Activated T-helper 1 cell treated with anti-CD3 and anti-CD28 coated beads, Interleukin-12 subunit alpha, Interleukin-12 subunit beta, Interleukin-2, Interleukin-4 antibody, amounts not matched to agents 30 ng/mL and 10 ng/mL and 1 ng/mL, durations not matched to agents 14 hours and 24 hours and 36 hours (primary cell): ENCODE measurements at regions of chr19 and their contacts with region 1.

Region 1: GRCh38 chr19:50724522-50725217 is 1.5 kb downstream of the CLEC11A start:
- DNase-seq: peak; percentile 97
- H3K4me3 Mint-ChIP-seq: peak overlapping the region; percentile 85
- H3K27ac Mint-ChIP-seq: peak overlapping the region; percentile 78
- H3K4me1 Mint-ChIP-seq: no peaks in the 10 kb centered on the region
- H3K27me3 Mint-ChIP-seq: peaks cover 38% of the 10 kb centered on the region

Region 2: DNA sequence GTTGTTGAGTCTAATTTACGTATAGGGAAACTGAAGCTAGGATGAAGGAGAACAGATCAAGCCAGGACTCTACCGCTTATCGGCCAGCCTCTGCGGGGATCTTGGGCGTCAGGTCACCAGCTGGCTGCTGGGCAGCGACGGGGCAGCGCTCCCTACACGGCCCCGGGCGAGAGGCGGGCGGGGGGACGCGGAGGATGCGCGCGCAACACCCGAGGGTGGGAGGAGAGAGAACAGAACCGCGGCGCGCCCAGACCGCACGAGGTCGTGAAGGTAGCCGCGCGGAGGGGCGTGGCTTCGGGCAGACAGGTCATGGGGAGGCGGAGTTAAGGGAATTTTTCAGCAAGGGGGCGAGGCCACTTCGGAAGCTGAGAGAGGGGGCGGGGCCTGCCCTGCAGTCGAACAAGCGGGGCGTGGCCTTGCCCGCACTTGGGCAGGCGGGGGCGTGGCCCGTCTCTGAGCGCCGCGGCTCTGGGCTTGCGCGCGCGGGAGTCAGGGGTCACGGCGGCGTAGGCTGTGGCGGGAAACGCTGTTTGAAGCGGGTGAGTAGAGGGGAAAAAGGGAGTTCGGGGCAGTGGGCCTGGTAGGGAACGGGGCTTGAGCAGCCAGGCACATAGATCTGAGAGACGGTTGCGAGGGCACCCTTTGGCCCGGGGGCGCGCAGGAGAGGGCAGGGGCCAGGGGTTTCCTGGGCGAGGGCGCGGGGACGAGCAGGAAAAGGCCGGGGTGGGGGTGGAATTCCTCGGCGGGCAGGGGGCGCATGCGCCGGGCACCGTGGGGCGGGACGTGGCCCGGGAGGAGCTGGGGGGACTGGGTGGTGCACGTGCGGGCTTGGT is 340.6 kb before region 1 on chr19 and contains the start of gene POLD1:
- intact Hi-C with region 1: loop called (anchors 2 kb)
- DNase-seq: peak; percentile 99
- H3K4me3 Mint-ChIP-seq: peak within 1 kb of the TSS; percentile 91
- H3K27ac Mint-ChIP-seq: peak within 1 kb of the TSS; percentile 96
- H3K4me1 Mint-ChIP-seq: peaks cover 28% of the 10 kb centered on the region
- H3K27me3 Mint-ChIP-seq: no peaks in the 10 kb centered on the region
- total RNA-seq, gene POLD1: 171 and 178 TPM in 2 replicates

Region 3: GRCh38 chr19:51097166-51097738 is 372.6 kb after region 1 on chr19:
- intact Hi-C with region 1: no loop called
- DNase-seq: peak; percentile 27
- H3K4me3 Mint-ChIP-seq: no peak overlapping the region
- H3K27ac Mint-ChIP-seq: peak overlapping the region; percentile 16
- H3K4me1 Mint-ChIP-seq: peaks cover 14% of the 10 kb centered on the region
- H3K27me3 Mint-ChIP-seq: no peaks in the 10 kb centered on the region